GM12878 (cell line): ENCODE measurements at regions of chr12 and their contacts with region 1.

Region 1: GRCh38 chr12:64544371-64545080 is 65.8 kb upstream of the RASSF3 start:
- DNase-seq: no peak
- ATAC-seq: no peak
- H3K4me3 ChIP-seq: no peak overlapping the region
- H3K27ac ChIP-seq: no peak overlapping the region
- H3K4me1 ChIP-seq: no peaks in the 10 kb centered on the region; the same call in 1 of the 2 replicates
- H3K27me3 ChIP-seq: no peaks in the 10 kb centered on the region
- CTCF ChIP-seq: no peak
- EP300 ChIP-seq: no peak
- POLR2A ChIP-seq: no peak
- RAD21 ChIP-seq: no peak

Region 2: DNA sequence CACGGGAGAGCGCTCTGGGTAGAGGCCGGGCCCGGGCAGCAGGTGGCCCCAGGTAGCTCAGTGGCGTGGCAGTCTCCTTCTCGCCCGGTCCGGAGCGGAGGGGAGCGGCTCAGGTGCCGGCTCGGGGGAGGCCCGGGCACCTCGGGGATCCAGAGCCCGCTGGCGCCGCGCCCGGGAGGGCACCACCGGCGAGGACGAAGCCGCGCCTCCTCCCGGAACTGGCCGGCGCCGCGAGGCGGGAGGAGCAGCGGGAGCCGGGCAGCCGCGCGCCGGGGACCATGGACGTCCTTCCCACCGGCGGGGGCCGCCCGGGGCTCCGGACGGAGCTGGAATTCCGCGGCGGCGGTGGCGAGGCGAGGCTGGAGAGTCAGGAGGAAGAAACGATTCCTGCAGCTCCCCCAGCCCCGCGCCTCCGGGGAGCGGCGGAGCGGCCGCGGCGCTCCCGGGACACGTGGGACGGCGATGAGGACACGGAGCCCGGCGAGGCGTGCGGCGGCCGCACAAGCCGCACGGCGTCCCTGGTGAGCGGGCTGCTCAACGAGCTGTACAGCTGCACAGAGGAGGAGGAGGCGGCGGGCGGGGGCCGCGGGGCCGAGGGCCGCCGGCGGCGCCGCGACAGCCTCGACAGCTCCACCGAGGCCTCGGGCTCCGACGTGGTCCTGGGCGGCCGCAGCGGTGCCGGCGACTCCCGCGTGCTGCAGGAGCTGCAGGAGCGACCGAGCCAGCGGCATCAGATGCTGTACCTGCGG is 236.2 kb after region 1 on chr12:
- CTCF ChIA-PET with region 1: interaction called, 5 read pairs
- POLR2A ChIA-PET with region 1: no interaction called
- RAD21 ChIA-PET with region 1: no interaction called
- SMC1A ChIA-PET with region 1: interaction called, 3 read pairs
- in situ Hi-C with region 1: no loop called
- intact Hi-C with region 1: loop called (anchors 10 kb)
- DNase-seq: no peak
- ATAC-seq: peak; percentile 71
- H3K4me3 ChIP-seq: peak overlapping the region; percentile 65
- H3K27ac ChIP-seq: no peak overlapping the region
- H3K4me1 ChIP-seq: peaks cover 3% of the 10 kb centered on the region; the same call in 1 of the 2 replicates
- H3K27me3 ChIP-seq: peaks cover 2 to 12% of the 10 kb centered on the region in 2 experiments; a peak in 3 of 4 replicates
- CTCF ChIP-seq: no peak
- EP300 ChIP-seq: no peak
- POLR2A ChIP-seq: no peak
- RAD21 ChIP-seq: no peak